ENCODE measurements at regions of chr5 and their contacts with region 1.

Region 1: DNA sequence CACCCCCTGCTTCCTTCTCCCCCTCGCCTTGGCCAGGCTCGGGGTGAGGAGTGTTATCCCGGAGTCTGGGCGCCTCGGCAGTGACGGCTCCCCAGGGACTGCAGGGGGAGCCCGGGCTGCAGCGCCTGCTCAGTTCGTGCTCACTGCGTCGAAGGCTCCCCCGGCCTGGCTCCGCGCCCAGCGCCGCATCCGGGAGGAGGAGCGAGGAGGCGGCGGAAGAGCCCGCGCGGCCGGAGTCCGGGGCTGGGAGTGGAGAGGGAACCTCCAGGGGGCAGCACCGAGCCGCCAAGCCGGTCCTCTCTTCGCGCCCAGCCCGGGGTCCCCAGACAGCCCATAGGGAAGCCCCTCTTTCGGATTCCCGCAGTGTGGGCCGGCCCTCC is 1.3 kb upstream of the EGR1 start:
- DNase-seq: peak; percentile 91 to 97 (median 94)
- ATAC-seq: peak; percentile 63
- H3K4me3 ChIP-seq: peak overlapping the region; percentile 90
- H3K27ac ChIP-seq: peak overlapping the region; percentile 91
- H3K4me1 ChIP-seq: peaks cover 28 to 60% of the 10 kb centered on the region in 2 experiments
- H3K27me3 ChIP-seq: no peaks in the 10 kb centered on the region
- CTCF ChIP-seq: peak; percentile 77 to 93 (median 85)
- EP300 ChIP-seq: no peak
- POLR2A ChIP-seq: peak; percentile 70; the same call in 1 of the 2 replicates
- RAD21 ChIP-seq: peak; percentile 79 to 91

Region 2: DNA sequence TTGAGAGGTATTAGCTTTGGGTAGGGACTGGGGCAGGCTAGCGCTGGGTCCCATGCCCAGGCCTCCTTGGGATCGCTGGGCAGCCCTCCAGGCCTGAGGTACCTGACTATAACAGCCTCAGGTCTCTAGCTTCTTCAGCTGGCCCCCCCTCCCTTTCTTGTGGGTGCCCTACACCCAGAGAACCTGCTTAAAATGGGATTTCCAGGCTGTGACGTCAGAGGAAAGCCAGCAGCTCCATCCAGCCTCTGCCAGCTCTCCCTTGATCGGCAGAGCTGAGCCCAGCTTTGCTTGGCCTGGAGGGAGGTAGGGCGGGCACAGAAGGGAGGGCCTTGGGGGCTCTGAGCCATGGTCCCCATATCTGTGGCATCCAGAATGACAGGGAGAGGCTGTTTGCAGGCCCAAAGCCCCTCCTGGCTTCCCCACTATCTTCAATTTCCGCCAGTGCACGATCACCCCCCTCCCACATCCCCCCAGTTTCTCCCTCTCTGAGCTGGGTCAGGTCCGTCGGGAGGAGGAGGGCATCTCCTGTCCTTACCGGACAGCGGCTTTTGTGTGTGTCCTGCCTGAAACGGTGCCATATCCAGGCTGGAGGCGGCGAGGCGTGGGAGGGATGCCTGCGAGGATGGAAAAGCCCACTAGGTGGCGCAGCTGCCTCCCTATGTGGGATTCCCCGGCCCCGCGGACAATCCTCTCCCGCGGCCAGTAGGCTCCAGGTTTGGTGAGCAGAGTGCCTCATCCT is 14.3 kb before region 1 on chr5:
- CTCF ChIA-PET with region 1: interaction called, 3 read pairs
- POLR2A ChIA-PET with region 1: interaction called, 28 read pairs
- in situ Hi-C with region 1: no loop called
- intact Hi-C with region 1: no loop called
- DNase-seq: peak; percentile 90 to 93 (median 92)
- ATAC-seq: peak; percentile 95
- H3K4me3 ChIP-seq: no peak overlapping the region
- H3K27ac ChIP-seq: no peak overlapping the region
- H3K4me1 ChIP-seq: peaks cover 9 to 47% of the 10 kb centered on the region in 2 experiments; a peak in 4 of 5 replicates
- H3K27me3 ChIP-seq: no peaks in the 10 kb centered on the region
- CTCF ChIP-seq: peak; percentile 96 to 98 (median 97)
- EP300 ChIP-seq: no peak
- POLR2A ChIP-seq: no peak
- RAD21 ChIP-seq: peak; percentile 91 to 96

Region 3: GRCh38 chr5:138491669-138492559 is 27.9 kb after region 1 on chr5:
- CTCF ChIA-PET with region 1: no interaction called
- POLR2A ChIA-PET with region 1: interaction called, 14 read pairs
- in situ Hi-C with region 1: no loop called
- intact Hi-C with region 1: loop called (anchors 2 kb)
- DNase-seq: peak; percentile 88 to 91 (median 90)
- ATAC-seq: peak; percentile 90
- H3K4me3 ChIP-seq: peak overlapping the region; percentile 49
- H3K27ac ChIP-seq: peak overlapping the region; percentile 78
- H3K4me1 ChIP-seq: peaks cover 51 to 54% of the 10 kb centered on the region in 2 experiments
- H3K27me3 ChIP-seq: no peaks in the 10 kb centered on the region
- CTCF ChIP-seq: no peak
- EP300 ChIP-seq: 0 out of 2 replicates have a peak, but pooled peaks have one; percentile 6
- POLR2A ChIP-seq: peak; percentile 29; the same call in 1 of the 2 replicates
- RAD21 ChIP-seq: peak in 1 of 2 experiments; percentile 3; a peak in 2 of 4 replicates

Region 4: DNA sequence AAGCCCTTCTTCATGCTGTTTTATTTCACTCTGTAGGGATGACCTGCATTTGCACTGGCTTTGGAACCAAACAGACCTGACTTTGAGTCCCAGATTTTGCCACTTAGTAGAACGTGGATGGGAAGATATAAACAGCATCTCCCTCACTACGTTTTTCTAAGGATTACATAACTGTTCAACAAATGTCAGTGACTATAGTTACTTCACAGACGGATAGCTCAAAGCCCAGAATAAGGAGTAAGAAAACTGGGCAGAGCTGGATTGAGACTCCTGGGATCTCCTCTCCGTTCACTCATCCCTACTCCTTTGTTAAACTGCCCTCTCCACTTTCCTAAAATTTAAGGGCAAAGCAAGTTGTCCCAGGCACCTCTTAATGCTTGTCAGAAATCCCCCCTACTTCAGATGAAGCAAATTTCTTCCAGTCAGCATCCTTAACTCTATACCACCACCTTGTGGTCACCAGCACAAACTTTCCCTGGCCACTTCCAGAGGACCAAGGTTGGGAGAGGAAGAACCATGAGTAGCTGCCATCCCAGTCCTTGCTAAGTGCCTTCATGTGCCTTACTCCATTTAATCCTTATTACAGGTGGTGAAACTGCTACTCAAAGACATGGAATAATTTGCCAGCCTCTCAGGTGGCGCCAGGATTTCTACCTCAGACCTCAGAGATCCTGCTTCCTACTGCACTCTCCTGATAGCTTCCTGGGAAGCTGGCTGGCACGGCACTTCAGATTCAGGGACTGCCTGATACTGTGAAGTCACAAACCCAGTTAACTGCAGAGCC is 39.7 kb after region 1 on chr5:
- CTCF ChIA-PET with region 1: interaction called, 57 read pairs
- POLR2A ChIA-PET with region 1: interaction called, 46 read pairs
- in situ Hi-C with region 1: loop called (anchors 5 kb)
- intact Hi-C with region 1: loop called (anchors 1 kb)
- DNase-seq: peak; percentile 74 to 80 (median 77)
- ATAC-seq: peak; percentile 81
- H3K4me3 ChIP-seq: no peak overlapping the region
- H3K27ac ChIP-seq: no peak overlapping the region
- H3K4me1 ChIP-seq: peaks cover 0 to 2% of the 10 kb centered on the region in 2 experiments; a peak in 1 of 5 replicates
- H3K27me3 ChIP-seq: no peaks in the 10 kb centered on the region
- CTCF ChIP-seq: peak; percentile 86 to 89 (median 88)
- EP300 ChIP-seq: no peak
- POLR2A ChIP-seq: no peak
- RAD21 ChIP-seq: peak; percentile 98

Region 5: GRCh38 chr5:139262742-139263445 is 798.9 kb after region 1 on chr5:
- CTCF ChIA-PET with region 1: no interaction called
- POLR2A ChIA-PET with region 1: no interaction called
- in situ Hi-C with region 1: no loop called
- intact Hi-C with region 1: loop called (anchors 2 kb)
- DNase-seq: peak; percentile 72 to 87 (median 78)
- ATAC-seq: peak; percentile 98
- H3K4me3 ChIP-seq: no peak overlapping the region
- H3K27ac ChIP-seq: peak overlapping the region; percentile 34; the same call in 2 of the 3 replicates
- H3K4me1 ChIP-seq: peaks cover 0 to 12% of the 10 kb centered on the region in 2 experiments; a peak in 4 of 5 replicates
- H3K27me3 ChIP-seq: no peaks in the 10 kb centered on the region
- CTCF ChIP-seq: peak; percentile 87 to 93 (median 88)
- EP300 ChIP-seq: peak; percentile 7; the same call in 1 of the 2 replicates
- POLR2A ChIP-seq: no peak
- RAD21 ChIP-seq: peak; percentile 95

Measured in K562 (cell line).